CD8-positive, alpha-beta T cell (primary cell): ENCODE measurements at regions of chr3 and their contacts with region 1.

Region 1: DNA sequence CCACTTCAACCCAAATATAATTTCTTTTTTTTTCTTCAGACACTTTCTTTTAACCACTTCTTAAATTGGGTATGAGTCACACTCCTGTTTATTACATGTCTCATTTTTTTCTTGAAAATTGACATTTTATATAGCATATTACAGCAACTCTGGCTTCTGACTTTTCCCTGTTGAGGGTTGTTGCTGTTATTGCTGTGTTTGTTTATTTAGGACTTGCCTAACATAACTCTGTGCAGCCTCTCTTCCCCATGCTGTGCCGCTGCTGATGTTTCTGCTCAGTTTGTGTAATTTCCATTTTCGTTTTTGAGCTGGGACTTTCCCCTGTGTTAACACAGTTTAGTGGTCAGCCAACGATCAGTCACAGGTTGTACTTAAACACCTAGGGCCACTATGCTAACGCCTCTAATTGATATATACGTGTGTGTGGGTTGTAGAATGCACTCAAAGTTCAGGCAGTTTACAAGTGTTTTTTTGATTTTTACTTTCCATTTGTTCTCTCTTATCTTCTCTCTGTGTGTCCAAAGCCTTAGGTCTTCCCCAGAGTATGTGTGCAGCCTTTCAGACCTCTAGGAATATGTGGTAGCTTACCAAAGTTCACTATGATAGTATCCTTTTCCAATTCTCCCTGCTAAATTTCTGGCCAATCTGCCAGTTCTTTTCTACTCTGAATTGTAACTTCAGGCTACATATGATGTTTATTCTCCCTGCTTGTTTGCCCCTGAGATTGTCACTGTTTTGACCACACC is 337.2 kb downstream of the ZBTB20 start:
- DNase-seq: peak in 5 of 9 experiments; percentile 10 to 76 (median 25)
- ATAC-seq: peak; percentile 78
- H3K4me3 ChIP-seq: no peak overlapping the region
- H3K4me3 Mint-ChIP-seq: peak overlapping the region; percentile 5
- H3K27ac ChIP-seq: peak overlapping the region in 1 of 2 experiments; percentile 11
- H3K27ac Mint-ChIP-seq: peak overlapping the region; percentile 1
- H3K4me1 ChIP-seq: no peaks in the 10 kb centered on the region
- H3K4me1 Mint-ChIP-seq: peaks cover 16% of the 10 kb centered on the region
- H3K27me3 ChIP-seq: no peaks in the 10 kb centered on the region
- H3K27me3 Mint-ChIP-seq: no peaks in the 10 kb centered on the region
- CTCF ChIP-seq: no peak

Region 2: DNA sequence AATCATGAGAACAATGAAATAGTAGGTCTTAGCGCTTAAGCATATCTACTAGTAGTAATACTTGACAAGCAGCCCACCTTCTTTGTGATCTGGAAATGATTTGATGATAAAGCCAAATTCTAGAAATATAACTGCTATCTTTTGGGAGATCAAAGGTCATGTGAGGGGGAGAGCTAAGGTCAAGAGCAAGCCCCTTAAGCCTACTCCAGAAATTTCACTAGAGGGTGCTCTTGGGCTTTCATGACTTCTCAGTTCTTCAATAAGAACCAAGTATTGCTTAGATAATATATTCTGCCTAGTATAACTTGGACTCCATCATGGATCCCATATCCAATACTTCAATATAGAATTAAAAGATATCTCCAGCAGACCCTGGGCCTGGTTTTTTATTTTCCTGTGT is 17.7 kb after region 1 on chr3:
- CTCF ChIA-PET with region 1: no interaction called
- POLR2A ChIA-PET with region 1: no interaction called
- intact Hi-C with region 1: loop called in 1 of 2 experiments (anchors 2 kb)
- DNase-seq: peak in 2 of 9 experiments; percentile 43 to 54
- ATAC-seq: no peak
- H3K4me3 ChIP-seq: no peak overlapping the region
- H3K4me3 Mint-ChIP-seq: no peak overlapping the region
- H3K27ac ChIP-seq: no peak overlapping the region
- H3K27ac Mint-ChIP-seq: no peak overlapping the region
- H3K4me1 ChIP-seq: no peaks in the 10 kb centered on the region
- H3K4me1 Mint-ChIP-seq: peaks cover 10% of the 10 kb centered on the region
- H3K27me3 ChIP-seq: no peaks in the 10 kb centered on the region
- H3K27me3 Mint-ChIP-seq: no peaks in the 10 kb centered on the region
- CTCF ChIP-seq: peak; percentile 22

Region 3: GRCh38 chr3:115388166-115388565 is 578.3 kb after region 1 on chr3:
- CTCF ChIA-PET with region 1: no interaction called
- POLR2A ChIA-PET with region 1: no interaction called
- intact Hi-C with region 1: no loop called
- DNase-seq: no peak
- ATAC-seq: no peak
- H3K4me3 ChIP-seq: no peak overlapping the region
- H3K4me3 Mint-ChIP-seq: no peak overlapping the region
- H3K27ac ChIP-seq: no peak overlapping the region
- H3K27ac Mint-ChIP-seq: no peak overlapping the region
- H3K4me1 ChIP-seq: no peaks in the 10 kb centered on the region
- H3K4me1 Mint-ChIP-seq: peaks cover 7% of the 10 kb centered on the region
- H3K27me3 ChIP-seq: no peaks in the 10 kb centered on the region
- H3K27me3 Mint-ChIP-seq: peaks cover 2% of the 10 kb centered on the region
- CTCF ChIP-seq: no peak